ENCODE measurements at regions of chr2 and their contacts with region 1.

Region 1: DNA sequence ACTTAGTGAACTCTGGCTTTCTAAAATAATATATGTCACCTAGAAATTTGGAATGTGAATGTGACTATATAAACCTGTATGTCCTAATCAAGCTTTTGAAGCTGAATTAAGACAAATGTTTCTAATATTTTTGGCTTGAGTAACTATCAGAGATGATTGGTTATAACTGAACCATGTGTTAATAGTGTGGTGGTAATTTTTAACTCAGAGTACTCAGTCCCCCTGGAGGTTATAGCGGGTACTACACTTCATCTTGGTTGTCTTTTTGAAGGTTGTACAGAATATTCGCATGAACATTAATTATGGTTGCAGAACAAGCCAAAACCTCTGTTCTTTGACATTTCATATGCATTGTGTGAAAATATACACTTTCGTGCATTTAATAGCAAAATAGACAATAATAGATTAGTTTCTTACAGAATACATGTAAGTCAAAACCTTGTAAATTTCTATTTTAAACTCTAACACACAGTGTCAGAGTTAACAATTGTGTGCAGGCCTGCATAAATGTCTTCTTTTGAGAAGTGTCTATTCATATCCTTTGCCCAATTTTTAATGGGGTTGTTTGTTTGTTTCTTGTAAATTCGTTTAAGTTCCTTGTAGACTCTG is 86.0 kb downstream of the OSBPL6 start:
- DNase-seq: no peak

Region 2: DNA sequence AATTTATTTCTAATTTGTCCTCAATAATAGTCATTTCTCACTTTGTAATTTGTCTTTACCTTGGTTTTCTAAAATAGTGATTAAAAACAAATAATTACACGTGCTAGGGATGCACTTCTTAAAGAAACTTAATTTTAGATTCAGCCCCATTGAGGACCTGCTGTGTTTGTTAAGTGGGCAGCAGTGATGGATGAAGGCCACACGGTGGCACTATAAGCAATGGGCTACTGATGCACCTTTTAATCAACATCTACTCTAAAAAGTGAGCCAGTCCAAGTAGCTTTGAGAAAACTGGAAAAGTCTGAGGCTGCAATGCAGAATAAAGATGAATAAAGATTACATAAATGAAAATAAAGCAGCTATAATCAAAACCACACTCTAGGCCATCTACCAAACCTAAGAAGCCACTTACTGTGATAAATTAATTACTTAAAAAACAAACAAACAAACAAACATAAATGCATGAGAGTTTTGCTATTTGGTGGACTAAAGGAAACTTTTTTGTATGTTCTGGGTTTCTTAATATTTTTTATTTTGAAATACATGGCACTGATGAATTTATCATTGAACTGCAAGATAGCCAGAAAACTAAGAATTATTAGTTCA is 297.1 kb before region 1 on chr2:
- intact Hi-C with region 1: no loop called
- DNase-seq: no peak

Region 3: GRCh38 chr2:178112202-178113152 is 167.9 kb before region 1 on chr2 and contains the start of gene RBM45:
- intact Hi-C with region 1: loop called (anchors 5 kb)
- DNase-seq: peak; percentile 94
- total RNA-seq, gene RBM45: 5.2 TPM

Region 4: GRCh38 chr2:178128836-178129630 is 151.3 kb before region 1 on chr2:
- intact Hi-C with region 1: loop called (anchors 2 kb)
- DNase-seq: no peak

Region 5: GRCh38 chr2:178414266-178415247 is 134.2 kb after region 1 on chr2:
- intact Hi-C with region 1: no loop called
- DNase-seq: peak; percentile 94